Activated CD4-positive, alpha-beta T cell treated with anti-CD3 and anti-CD28 coated beads for 36 hours (primary cell): ENCODE measurements at regions of chr22 and their contacts with region 1.

Region 1: DNA sequence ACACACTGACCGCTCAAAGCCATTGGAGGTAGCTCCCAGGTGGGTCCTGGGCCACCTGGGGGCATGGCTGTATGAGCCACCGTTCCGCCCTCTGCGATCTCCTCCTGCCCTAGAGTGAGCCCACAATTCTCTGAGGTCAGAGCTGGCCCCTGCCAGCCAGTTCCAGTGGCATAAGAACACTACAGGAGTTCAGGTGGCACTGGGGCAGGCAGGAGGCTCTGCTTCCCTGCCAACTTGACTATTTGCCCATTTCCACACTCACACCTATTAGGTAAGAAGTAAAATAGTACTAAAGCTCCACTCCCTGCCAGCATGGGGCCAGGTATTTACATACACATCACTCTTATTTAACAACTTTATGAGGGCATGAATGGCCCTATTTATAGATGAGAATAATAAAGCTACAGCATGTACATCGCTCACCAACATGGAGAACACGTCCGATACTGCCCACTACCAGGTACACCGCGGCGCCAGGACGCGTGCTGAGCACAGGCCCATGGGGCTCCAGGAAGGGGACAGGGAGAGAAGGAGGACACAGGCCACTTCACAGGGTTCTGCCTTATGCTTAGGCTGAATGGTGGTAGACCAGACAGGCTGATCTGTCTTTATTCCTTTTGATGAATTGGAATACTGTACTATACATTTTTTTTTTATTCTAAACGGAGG is 26.2 kb downstream of the PISD start:
- DNase-seq: no peak
- ATAC-seq: no peak
- H3K4me3 Mint-ChIP-seq: no peak overlapping the region
- H3K27ac Mint-ChIP-seq: peak overlapping the region; percentile 58
- H3K4me1 Mint-ChIP-seq: peaks cover 58% of the 10 kb centered on the region
- H3K27me3 Mint-ChIP-seq: no peaks in the 10 kb centered on the region

Region 2: GRCh38 chr22:31561238-31561887 is 74.4 kb before region 1 on chr22:
- CTCF ChIA-PET with region 1: interaction called, 6 read pairs
- POLR2A ChIA-PET with region 1: no interaction called
- intact Hi-C with region 1: loop called (anchors 1 to 2 kb)
- DNase-seq: peak; percentile 81
- ATAC-seq: peak; percentile 96
- H3K4me3 Mint-ChIP-seq: no peak overlapping the region
- H3K27ac Mint-ChIP-seq: peak overlapping the region; percentile 43
- H3K4me1 Mint-ChIP-seq: peaks cover 2% of the 10 kb centered on the region
- H3K27me3 Mint-ChIP-seq: no peaks in the 10 kb centered on the region